ENCODE measurements at regions of chr2 and their contacts with region 1.

Region 1: DNA sequence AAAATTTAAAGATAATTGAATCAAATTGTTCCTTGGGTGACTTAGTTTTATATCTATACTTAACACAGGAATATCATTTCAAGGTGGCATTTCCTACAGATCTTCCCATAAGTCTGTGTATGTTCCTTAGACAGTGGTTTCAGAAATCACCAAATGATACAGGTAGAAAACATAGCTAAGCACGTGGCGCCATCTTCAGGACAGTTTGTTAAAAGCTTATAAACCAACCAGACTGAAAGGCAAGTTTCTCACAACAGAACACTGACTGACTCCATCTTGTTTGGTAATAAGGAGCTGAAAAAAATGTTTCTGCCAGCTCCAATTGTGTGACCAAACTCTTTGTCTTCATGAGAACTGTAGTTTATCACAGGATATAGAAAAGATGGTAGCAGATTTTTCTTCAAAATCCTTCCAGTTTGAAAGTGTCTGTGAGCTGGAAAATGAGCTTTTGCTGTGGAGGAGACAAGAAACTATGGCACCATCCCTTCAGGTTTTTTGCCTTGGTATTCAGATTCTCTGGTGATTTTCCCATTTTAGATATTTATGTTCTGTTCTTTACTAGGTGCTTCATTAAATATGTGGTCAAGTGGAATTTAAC is 34.8 kb upstream of the NEUROD1 start:
- DNase-seq: peak; percentile 78
- ATAC-seq: peak; percentile 92
- H3K4me3 ChIP-seq: no peak overlapping the region
- H3K27ac ChIP-seq: no peak overlapping the region; the same call in 1 of the 2 replicates
- H3K4me1 ChIP-seq: no peaks in the 10 kb centered on the region
- H3K27me3 ChIP-seq: no peaks in the 10 kb centered on the region
- CTCF ChIP-seq: peak; percentile 67; the same call in 1 of the 2 replicates

Region 2: DNA sequence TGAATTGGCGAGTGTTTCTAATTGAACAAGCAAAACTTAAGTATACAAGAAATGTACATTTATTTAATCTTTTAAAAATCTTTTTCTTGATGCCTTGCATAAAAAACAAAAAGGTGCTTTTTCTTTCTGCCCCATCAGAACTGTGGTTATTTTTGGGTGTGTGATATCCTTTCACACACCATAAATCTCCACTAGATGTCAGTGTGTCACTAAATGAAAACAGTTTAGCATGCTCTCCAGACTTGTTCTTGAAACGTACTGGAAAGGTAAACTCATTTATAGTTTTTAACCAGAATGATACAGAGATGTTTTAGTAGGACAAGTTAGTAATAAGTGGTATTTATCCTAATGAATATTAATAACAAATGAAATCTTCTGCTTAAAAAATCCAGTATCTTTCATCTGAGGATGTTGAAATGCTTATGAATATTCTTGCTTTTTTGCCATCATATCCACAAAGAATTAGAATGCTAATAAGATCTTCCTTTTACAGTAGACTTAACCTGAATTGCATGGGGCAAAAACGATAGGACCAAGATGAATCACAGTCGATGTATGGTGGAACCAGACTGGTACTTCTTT is 637.9 kb before region 1 on chr2:
- CTCF ChIA-PET with region 1: no interaction called
- POLR2A ChIA-PET with region 1: no interaction called
- in situ Hi-C with region 1: no loop called
- intact Hi-C with region 1: loop called (anchors 5 kb)
- DNase-seq: peak; percentile 22
- ATAC-seq: peak; percentile 90
- H3K4me3 ChIP-seq: no peak overlapping the region
- H3K27ac ChIP-seq: no peak overlapping the region
- H3K4me1 ChIP-seq: no peaks in the 10 kb centered on the region
- H3K27me3 ChIP-seq: no peaks in the 10 kb centered on the region
- CTCF ChIP-seq: peak; percentile 74; the same call in 1 of the 2 replicates

Region 3: GRCh38 chr2:181104512-181105115 is 610.5 kb before region 1 on chr2:
- CTCF ChIA-PET with region 1: interaction called, 3 read pairs
- POLR2A ChIA-PET with region 1: no interaction called
- in situ Hi-C with region 1: no loop called
- intact Hi-C with region 1: loop called (anchors 2 kb)
- DNase-seq: peak; percentile 52
- ATAC-seq: peak; percentile 72; the same call in 1 of the 2 replicates
- H3K4me3 ChIP-seq: no peak overlapping the region
- H3K27ac ChIP-seq: no peak overlapping the region
- H3K4me1 ChIP-seq: peaks cover 11% of the 10 kb centered on the region
- H3K27me3 ChIP-seq: no peaks in the 10 kb centered on the region
- CTCF ChIP-seq: peak; percentile 82; the same call in 1 of the 2 replicates

Region 4: GRCh38 chr2:181573140-181573736 is 141.9 kb before region 1 on chr2:
- CTCF ChIA-PET with region 1: interaction called, 58 read pairs
- POLR2A ChIA-PET with region 1: interaction called, 3 read pairs
- in situ Hi-C with region 1: no loop called
- intact Hi-C with region 1: loop called (anchors 1 kb)
- DNase-seq: no peak
- ATAC-seq: peak; percentile 56; the same call in 1 of the 2 replicates
- H3K4me3 ChIP-seq: no peak overlapping the region
- H3K27ac ChIP-seq: no peak overlapping the region
- H3K4me1 ChIP-seq: no peaks in the 10 kb centered on the region
- H3K27me3 ChIP-seq: no peaks in the 10 kb centered on the region
- CTCF ChIP-seq: peak; percentile 67; the same call in 1 of the 2 replicates